ENCODE measurements at regions of chr15 and their contacts with region 1.

Region 1: DNA sequence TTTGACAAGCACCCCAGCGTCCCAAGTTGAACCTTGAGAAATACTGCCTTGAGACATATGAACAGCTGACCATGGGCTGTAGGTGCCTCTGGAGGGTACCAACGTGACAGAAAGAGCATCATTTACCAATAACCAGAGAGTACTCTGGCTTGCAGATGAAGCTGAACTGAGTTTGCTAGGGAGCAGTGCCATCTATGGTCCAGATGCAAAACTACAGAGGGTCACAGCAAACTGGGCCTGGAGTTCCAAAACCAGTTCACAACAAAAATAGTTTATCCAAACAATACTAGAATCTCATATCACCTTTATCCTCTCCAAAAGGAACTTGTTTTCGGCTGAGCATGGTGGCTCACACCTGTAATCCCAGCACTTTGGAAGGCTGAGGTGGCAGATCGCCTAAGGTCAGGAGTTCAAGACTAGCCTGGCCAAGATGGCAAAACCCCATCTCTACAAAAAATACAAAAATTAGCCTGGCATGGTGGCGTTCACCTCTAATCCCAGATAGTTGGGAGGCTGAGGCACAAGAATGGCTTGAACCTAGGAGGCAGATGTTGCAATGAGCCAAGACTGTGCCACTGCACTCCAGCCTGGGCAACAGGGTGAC is 69.3 kb downstream of the CHAC1 start:
- DNase-seq: no peak
- H3K4me3 ChIP-seq: no peak overlapping the region
- H3K27ac ChIP-seq: no peak overlapping the region
- H3K4me1 ChIP-seq: peaks cover 3% of the 10 kb centered on the region
- H3K27me3 ChIP-seq: no peaks in the 10 kb centered on the region
- CTCF ChIP-seq: peak in 3 of 4 experiments; percentile 15 to 62 (median 58)
- POLR2A ChIP-seq: no peak

Region 2: DNA sequence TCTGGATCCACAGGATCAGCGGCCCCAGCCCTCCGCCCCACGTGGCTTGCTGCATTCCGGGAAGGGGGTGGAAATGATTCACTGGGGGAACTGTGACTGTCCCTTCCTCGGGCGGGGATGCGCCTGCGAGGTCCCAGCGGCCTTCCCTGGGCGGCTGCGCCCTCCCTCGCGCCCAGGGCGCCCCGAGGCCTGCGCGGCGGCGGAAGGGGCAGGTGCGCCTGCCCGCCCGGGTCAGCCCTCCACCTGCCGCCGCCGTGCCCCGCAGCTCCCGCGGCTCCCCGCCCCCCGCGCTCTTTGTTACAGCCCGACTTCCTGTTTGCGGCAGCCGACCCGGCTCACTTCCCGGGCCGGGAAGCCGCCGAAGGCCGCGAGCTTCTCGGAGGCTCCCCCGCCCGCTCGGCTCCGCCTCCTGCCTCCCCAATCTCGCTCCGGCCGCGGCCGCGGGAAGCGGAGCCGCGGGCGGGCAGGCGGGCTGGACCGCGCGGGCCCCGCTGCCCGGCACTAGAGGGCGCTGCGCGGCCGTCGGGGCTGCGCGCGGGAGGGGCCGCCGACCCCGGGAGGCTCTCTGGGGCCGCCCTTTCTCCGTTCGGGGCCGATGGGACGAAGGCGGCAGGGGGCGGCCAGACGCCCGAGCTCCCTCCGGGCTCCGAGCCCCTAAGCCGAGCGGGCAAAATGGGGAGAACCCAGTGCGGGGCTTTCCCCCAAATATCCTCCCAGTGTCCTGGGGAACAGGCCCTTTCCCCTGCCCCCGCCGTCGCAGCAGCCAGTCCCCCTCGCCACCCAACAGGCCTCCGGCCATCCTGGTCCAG is 80.9 kb before region 1 on chr15:
- intact Hi-C with region 1: loop called (anchors 2 kb)
- DNase-seq: peak; percentile 45
- H3K4me3 ChIP-seq: peak overlapping the region; percentile 38 to 50
- H3K27ac ChIP-seq: peak overlapping the region; percentile 70 to 74
- H3K4me1 ChIP-seq: peaks cover 7% of the 10 kb centered on the region
- H3K27me3 ChIP-seq: no peaks in the 10 kb centered on the region
- CTCF ChIP-seq: peak; percentile 50 to 92 (median 68)
- POLR2A ChIP-seq: peak; percentile 12

Region 3: DNA sequence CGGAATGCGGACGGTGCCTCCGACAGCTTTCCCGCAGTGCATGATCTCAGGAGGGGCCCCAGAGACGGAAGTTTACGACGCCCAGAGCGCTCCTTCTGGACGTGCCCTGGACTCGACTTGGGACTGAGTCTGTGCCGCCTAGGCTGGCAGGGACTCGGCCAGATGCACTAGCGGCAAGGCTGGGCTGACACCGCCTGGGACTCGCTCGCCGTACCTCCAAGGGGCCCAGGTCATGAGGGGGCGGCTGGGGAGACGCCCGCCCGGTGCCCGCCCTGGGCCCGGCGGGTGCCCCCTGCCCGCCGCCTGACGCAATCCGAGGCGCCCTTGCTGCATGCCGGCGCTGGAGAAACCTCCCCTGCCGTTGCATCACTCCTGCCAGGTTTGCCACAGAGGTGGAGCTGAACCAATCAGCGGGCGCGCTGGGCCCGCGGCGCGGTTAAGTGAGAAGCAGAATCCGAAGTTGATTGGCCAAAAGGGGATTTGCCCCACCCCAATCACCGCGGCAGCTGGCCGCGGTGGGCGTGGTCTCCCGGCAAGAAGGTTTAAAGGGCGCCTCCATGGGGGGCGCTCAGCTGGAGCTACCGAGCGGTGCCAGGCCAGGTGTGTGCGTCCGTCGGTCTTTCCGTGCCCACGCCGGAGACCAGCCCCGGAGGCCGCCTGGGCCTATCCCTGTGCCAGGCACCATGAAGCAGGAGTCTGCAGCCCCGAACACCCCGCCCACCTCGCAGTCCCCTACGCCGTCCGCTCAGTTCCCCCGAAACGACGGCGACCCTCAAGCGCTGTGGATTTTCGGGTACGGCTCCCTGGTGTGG is 69.5 kb before region 1 on chr15 and contains the start of gene CHAC1:
- intact Hi-C with region 1: loop called (anchors 5 kb)
- DNase-seq: peak; percentile 96
- H3K4me3 ChIP-seq: peak within 1 kb of the TSS; percentile 60 to 65
- H3K27ac ChIP-seq: peak within 1 kb of the TSS; percentile 52 to 60
- H3K4me1 ChIP-seq: peaks cover 5% of the 10 kb centered on the region
- H3K27me3 ChIP-seq: no peaks in the 10 kb centered on the region
- CTCF ChIP-seq: peak in 1 of 4 experiments; percentile 18
- POLR2A ChIP-seq: peak; percentile 39
- total RNA-seq, gene CHAC1: 0.18 to 2.7 TPM

Measured in prostate gland (tissue), 2 donors.